ENCODE measurements at regions of chr5 and their contacts with region 1.

Region 1: DNA sequence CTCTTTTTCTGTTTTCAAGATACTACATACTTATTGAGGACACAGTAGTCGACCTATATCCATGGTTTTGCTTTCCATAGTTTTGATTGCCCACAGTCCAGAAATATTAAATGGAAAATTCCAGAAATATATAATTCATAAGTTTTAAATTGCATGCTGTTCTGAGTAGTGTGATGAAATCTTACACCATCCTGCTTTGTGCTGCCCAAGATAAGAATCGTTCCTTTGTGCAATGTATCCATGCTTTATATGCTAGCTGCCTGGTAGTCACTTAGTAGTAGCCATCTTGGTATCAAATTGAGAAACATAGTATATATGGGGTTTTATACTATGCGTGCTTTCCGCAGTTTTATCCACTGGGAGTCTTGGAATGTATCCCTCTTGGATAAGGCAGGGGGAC is 59.0 kb downstream of the CWC27 start:
- DNase-seq: no peak
- ATAC-seq: no peak
- H3K4me3 ChIP-seq: no peak overlapping the region
- H3K27ac ChIP-seq: no peak overlapping the region
- H3K4me1 ChIP-seq: no peaks in the 10 kb centered on the region
- H3K27me3 ChIP-seq: no peaks in the 10 kb centered on the region
- CTCF ChIP-seq: no peak

Region 2: DNA sequence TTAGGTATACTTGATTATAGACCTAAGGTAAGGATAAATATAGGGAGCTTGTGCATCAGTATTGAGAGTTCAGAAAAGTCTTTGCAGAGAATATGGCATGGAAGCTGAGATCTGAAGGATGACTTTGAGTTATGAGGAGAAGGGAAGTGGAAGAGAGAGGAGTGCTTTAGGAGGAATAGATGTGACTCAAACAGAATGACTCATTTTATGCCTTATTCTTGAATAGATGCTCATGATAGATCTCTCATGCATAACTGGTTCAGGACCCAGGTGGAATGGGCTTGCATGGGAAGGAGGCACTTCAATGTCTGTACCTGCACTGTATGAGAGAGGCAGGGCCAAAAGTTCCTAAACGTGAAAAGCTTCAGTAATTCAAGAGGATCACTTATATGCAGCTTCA is 44.3 kb after region 1 on chr5:
- CTCF ChIA-PET with region 1: no interaction called
- POLR2A ChIA-PET with region 1: no interaction called
- intact Hi-C with region 1: loop called (anchors 10 kb)
- DNase-seq: peak; percentile 42
- ATAC-seq: peak; percentile 51; the same call in 1 of the 2 replicates
- H3K4me3 ChIP-seq: no peak overlapping the region
- H3K27ac ChIP-seq: no peak overlapping the region
- H3K4me1 ChIP-seq: peaks cover 9% of the 10 kb centered on the region
- H3K27me3 ChIP-seq: no peaks in the 10 kb centered on the region
- CTCF ChIP-seq: no peak